A673 (cell line): ENCODE measurements at regions of chr2 and their contacts with region 1.

Region 1: DNA sequence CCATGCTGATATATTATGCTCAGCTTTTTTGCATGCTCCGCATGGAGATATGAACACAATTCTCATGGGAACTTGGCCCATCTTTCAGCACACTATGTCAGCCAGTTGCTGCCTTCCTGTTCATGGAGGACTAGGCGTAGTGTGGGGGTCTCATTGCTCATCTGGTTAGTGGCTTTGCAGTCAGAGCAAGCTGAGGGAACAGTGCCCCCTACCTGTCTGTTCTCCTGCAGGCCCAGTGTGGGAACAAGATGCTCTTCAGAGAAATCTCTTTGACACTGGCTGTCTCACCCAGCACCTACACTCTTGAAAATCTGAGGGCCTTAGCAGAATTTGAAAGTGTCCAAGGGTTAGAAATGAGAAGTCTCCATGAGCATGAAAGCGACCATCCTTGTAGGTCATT is 47.1 kb downstream of the SPTBN1 start:
- DNase-seq: peak; percentile 77
- H3K4me3 ChIP-seq: no peak overlapping the region
- H3K27ac ChIP-seq: no peak overlapping the region
- H3K4me1 ChIP-seq: peaks cover 21% of the 10 kb centered on the region
- H3K27me3 ChIP-seq: no peaks in the 10 kb centered on the region
- CTCF ChIP-seq: peak; percentile 85

Region 2: DNA sequence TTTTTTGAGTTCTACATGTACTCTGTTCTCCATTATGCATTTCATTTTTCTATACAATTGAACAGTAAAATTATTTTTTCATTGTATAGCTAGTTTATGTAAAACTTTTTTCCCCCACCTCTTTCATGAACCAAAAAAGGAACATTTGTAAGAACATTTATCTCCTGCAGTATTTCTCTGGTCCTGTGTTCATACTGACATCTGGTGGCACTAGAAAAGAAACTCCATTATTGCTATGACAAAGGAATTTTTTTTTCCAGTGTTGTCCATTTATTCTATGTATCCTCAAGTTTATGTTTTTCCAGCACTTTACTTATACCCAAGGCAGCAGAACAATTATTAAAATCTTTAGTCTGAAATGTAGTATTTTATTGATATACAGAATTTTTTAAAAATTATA is 763.0 kb before region 1 on chr2:
- CTCF ChIA-PET with region 1: no interaction called
- POLR2A ChIA-PET with region 1: no interaction called
- intact Hi-C with region 1: no loop called
- DNase-seq: peak; percentile 50
- H3K4me3 ChIP-seq: no peak overlapping the region
- H3K27ac ChIP-seq: no peak overlapping the region
- H3K4me1 ChIP-seq: no peaks in the 10 kb centered on the region
- H3K27me3 ChIP-seq: no peaks in the 10 kb centered on the region
- CTCF ChIP-seq: peak; percentile 59

Region 3: GRCh38 chr2:54115284-54116137 is 387.7 kb before region 1 on chr2 and contains the start of gene ACYP2:
- CTCF ChIA-PET with region 1: no interaction called
- POLR2A ChIA-PET with region 1: no interaction called
- intact Hi-C with region 1: loop called (anchors 2 kb)
- DNase-seq: peak; percentile 98
- H3K4me3 ChIP-seq: peak within 1 kb of the TSS; percentile 61
- H3K27ac ChIP-seq: peak within 1 kb of the TSS; percentile 98
- H3K4me1 ChIP-seq: peaks cover 7% of the 10 kb centered on the region
- H3K27me3 ChIP-seq: no peaks in the 10 kb centered on the region
- CTCF ChIP-seq: peak; percentile 47
- total RNA-seq, gene ACYP2: 6.0 and 10.1 TPM in 2 replicates

Region 4: GRCh38 chr2:54206596-54206995 is 296.6 kb before region 1 on chr2:
- CTCF ChIA-PET with region 1: interaction called, 7 read pairs
- POLR2A ChIA-PET with region 1: no interaction called
- intact Hi-C with region 1: loop called (anchors 5 kb)
- DNase-seq: peak; percentile 76
- H3K4me3 ChIP-seq: no peak overlapping the region
- H3K27ac ChIP-seq: no peak overlapping the region
- H3K4me1 ChIP-seq: peaks cover 32% of the 10 kb centered on the region
- H3K27me3 ChIP-seq: no peaks in the 10 kb centered on the region
- CTCF ChIP-seq: peak; percentile 70

Region 5: GRCh38 chr2:54599914-54600313 is 96.7 kb after region 1 on chr2:
- CTCF ChIA-PET with region 1: no interaction called
- POLR2A ChIA-PET with region 1: no interaction called
- intact Hi-C with region 1: no loop called
- DNase-seq: no peak
- H3K4me3 ChIP-seq: no peak overlapping the region
- H3K27ac ChIP-seq: no peak overlapping the region
- H3K4me1 ChIP-seq: peaks cover 40% of the 10 kb centered on the region
- H3K27me3 ChIP-seq: no peaks in the 10 kb centered on the region
- CTCF ChIP-seq: no peak